PC-9 (cell line): ENCODE measurements at regions of chr6 and their contacts with region 1.

Region 1: DNA sequence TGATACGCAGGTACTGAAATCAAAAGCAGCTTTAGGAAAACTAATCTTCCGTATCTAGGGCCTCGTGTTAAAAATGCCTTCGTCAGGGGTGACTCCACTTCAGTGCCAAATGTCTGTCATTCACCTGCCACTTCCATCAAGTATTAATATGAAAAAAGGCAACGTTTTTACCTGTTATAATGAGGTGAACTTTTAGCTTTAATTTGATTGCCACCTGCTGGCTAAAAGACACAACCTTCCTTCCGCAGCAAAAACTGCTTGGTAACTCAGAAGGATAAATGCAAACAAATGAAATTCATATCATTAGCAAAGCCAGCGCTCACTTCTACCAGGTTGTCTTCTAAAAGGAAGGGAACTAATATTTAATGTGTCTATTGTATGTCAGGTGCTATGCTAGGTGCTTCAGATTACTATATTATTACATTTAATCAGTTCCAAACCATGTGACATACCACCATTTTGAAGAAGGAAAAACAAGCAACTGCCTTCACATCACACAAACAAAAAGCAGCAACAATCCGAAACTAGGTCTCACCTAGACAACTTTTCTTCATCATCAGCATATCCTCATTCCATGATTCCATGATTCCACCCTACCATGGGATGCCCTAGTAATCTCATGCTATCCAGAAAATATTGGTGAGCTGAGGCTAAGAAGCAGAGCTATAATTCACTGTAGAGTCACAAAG is 20.6 kb upstream of the ARHGAP18 start:
- DNase-seq: peak in 1 of 2 experiments; percentile 50
- H3K4me3 ChIP-seq: no peak overlapping the region
- H3K27ac ChIP-seq: no peak overlapping the region
- H3K4me1 ChIP-seq: no peaks in the 10 kb centered on the region
- H3K27me3 ChIP-seq: no peaks in the 10 kb centered on the region
- CTCF ChIP-seq: peak; percentile 89

Region 2: GRCh38 chr6:129679758-129680157 is 50.9 kb before region 1 on chr6:
- CTCF ChIA-PET with region 1: no interaction called
- POLR2A ChIA-PET with region 1: no interaction called
- intact Hi-C with region 1: no loop called
- DNase-seq: no peak
- H3K4me3 ChIP-seq: no peak overlapping the region
- H3K27ac ChIP-seq: no peak overlapping the region
- H3K4me1 ChIP-seq: peaks cover 25% of the 10 kb centered on the region
- H3K27me3 ChIP-seq: no peaks in the 10 kb centered on the region
- CTCF ChIP-seq: no peak

Region 3: GRCh38 chr6:130020907-130021629 is 290.4 kb after region 1 on chr6:
- CTCF ChIA-PET with region 1: no interaction called
- POLR2A ChIA-PET with region 1: no interaction called
- intact Hi-C with region 1: loop called (anchors 5 kb)
- DNase-seq: peak; percentile 71 to 76
- H3K4me3 ChIP-seq: peak overlapping the region; percentile 70
- H3K27ac ChIP-seq: no peak overlapping the region
- H3K4me1 ChIP-seq: no peaks in the 10 kb centered on the region
- H3K27me3 ChIP-seq: no peaks in the 10 kb centered on the region
- CTCF ChIP-seq: peak; percentile 95